ENCODE measurements at regions of chr14 and their contacts with region 1.

Region 1: GRCh38 chr14:102020058-102020971 is 55.9 kb downstream of the DYNC1H1 start:
- DNase-seq: no peak
- ATAC-seq: no peak
- H3K4me3 ChIP-seq: no peak overlapping the region
- H3K27ac ChIP-seq: no peak overlapping the region
- H3K4me1 ChIP-seq: no peaks in the 10 kb centered on the region
- H3K27me3 ChIP-seq: no peaks in the 10 kb centered on the region
- CTCF ChIP-seq: no peak
- EP300 ChIP-seq: no peak
- POLR2A ChIP-seq: no peak
- RAD21 ChIP-seq: no peak

Region 2: DNA sequence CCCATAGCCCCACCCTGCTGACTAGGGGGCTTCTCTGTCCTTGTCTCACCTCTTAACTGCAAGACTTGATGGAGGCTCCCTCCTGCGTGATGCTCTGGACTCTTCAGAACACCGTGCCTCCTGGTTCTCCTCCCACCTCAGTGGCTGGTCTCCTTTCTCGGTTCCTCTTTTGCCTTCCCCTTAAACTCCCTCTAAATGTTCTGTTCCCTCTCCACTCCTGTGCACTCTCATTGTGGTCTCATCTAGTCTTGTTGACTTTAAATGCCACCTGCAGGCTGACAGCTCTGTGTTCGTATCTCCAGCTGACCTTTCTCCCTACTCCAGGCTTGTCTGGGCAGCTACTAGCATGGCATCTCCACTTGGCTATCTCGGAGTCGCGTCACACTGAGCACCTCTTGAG is 27.6 kb before region 1 on chr14:
- CTCF ChIA-PET with region 1: no interaction called
- POLR2A ChIA-PET with region 1: no interaction called
- RAD21 ChIA-PET with region 1: no interaction called
- SMC1A ChIA-PET with region 1: no interaction called
- in situ Hi-C with region 1: no loop called
- intact Hi-C with region 1: no loop called
- DNase-seq: peak; percentile 84
- ATAC-seq: peak; percentile 97
- H3K4me3 ChIP-seq: peak overlapping the region; percentile 37; the same call in 1 of the 2 replicates
- H3K27ac ChIP-seq: peak overlapping the region; percentile 29; the same call in 1 of the 2 replicates
- H3K4me1 ChIP-seq: peaks cover 29% of the 10 kb centered on the region
- H3K27me3 ChIP-seq: no peaks in the 10 kb centered on the region
- CTCF ChIP-seq: peak; percentile 24 to 61 (median 38); a peak in 4 of 6 replicates
- EP300 ChIP-seq: peak; percentile 43 to 86; a peak in 3 of 4 replicates
- POLR2A ChIP-seq: peak; percentile 44; the same call in 1 of the 2 replicates
- RAD21 ChIP-seq: peak; percentile 63

Region 3: DNA sequence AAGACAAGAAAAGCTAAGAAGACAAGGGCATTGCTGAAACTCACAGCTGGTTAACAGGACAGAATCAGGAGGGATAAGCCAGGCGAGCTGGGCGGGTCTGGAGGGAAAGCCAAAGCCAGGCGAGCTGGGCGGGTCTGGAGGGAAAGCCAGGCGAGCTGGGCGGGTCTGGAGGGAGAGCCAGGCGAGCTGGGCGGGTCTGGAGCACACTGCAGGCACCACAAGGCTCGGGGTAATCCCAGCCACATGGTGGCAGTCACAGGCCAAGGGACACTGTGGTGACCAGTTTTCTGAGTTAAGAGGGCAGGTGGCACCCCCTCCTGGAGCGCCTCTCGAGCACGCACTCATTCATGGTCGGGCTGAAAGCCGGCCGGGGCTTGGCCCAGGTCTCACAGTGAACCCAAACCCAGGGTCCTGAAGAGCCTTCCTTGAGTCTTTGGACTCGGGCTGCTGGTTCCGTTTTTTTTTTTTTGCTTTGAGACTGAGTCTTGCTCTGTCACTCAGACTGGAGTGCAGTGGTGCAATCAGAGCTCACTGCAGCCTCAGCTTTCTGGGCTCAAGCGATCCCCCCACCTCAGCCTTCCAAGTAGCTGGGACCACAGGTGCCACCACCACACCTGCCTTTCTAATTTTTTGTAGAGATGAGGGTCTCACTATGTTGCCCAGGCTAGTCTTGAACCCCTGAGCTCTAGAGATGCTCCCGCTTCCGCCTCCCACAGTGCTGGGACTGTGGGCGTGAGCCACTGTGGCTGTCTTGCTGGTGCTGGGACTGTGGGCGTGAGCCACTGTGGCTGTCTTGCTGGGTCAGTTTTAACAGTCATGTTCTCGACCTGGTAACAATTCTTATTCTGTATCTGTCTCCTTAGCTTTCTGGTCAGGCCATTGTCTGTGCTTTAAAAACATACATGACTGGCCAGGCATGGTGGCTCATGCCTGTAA is 26.3 kb after region 1 on chr14:
- CTCF ChIA-PET with region 1: no interaction called
- POLR2A ChIA-PET with region 1: interaction called, 3 read pairs
- RAD21 ChIA-PET with region 1: no interaction called
- SMC1A ChIA-PET with region 1: no interaction called
- in situ Hi-C with region 1: no loop called
- intact Hi-C with region 1: loop called (anchors 2 kb)
- DNase-seq: no peak
- ATAC-seq: peak; percentile 83
- H3K4me3 ChIP-seq: no peak overlapping the region
- H3K27ac ChIP-seq: no peak overlapping the region
- H3K4me1 ChIP-seq: no peaks in the 10 kb centered on the region
- H3K27me3 ChIP-seq: no peaks in the 10 kb centered on the region
- CTCF ChIP-seq: peak; percentile 14 to 41 (median 37); a peak in 4 of 6 replicates
- EP300 ChIP-seq: no peak
- POLR2A ChIP-seq: no peak; the same call in 1 of the 2 replicates
- RAD21 ChIP-seq: peak; percentile 33; the same call in 1 of the 2 replicates

Measured in GM12878 (cell line).